Transverse colon (tissue), 4 donors: ENCODE measurements at regions of chr10 and their contacts with region 1.

Region 1: DNA sequence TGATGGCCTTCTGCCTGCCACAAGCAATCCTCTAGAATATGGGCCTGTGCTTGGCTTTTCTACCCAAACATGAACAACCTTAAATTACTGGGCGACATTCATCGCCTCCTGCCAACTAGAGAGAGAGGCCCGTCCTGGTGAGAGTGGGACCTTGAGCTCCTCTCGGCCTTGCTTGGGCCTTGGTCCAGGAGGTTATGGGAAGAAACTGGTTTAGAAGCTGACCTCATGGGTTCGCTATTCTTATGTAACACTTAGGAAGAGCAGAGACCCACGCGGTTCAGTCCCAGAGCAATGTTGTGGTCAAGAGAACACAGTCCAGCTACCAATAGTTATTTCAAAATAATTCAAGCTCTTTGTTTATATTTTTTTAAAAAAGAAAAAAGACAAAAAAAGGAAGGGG is 176.3 kb upstream of the ZNF32 start:
- DNase-seq: peak; percentile 41
- H3K4me3 ChIP-seq: no peak overlapping the region
- H3K27ac ChIP-seq: peak overlapping the region; percentile 31 to 76 (median 68)
- H3K4me1 ChIP-seq: peaks cover 0 to 10% (median 0%) of the 10 kb centered on the region in 4 donors
- H3K27me3 ChIP-seq: no peaks in the 10 kb centered on the region
- CTCF ChIP-seq: no peak
- EP300 ChIP-seq: no peak
- POLR2A ChIP-seq: no peak

Region 2: GRCh38 chr10:43801626-43802025 is 23.3 kb before region 1 on chr10:
- in situ Hi-C with region 1: no loop called
- intact Hi-C with region 1: loop called (anchors 2 kb)
- DNase-seq: no peak
- H3K4me3 ChIP-seq: no peak overlapping the region
- H3K27ac ChIP-seq: no peak overlapping the region
- H3K4me1 ChIP-seq: no peaks in the 10 kb centered on the region
- H3K27me3 ChIP-seq: no peaks in the 10 kb centered on the region
- CTCF ChIP-seq: no peak
- EP300 ChIP-seq: no peak
- POLR2A ChIP-seq: no peak

Region 3: GRCh38 chr10:43922335-43923280 is 97.7 kb after region 1 on chr10:
- in situ Hi-C with region 1: no loop called
- intact Hi-C with region 1: no loop called
- DNase-seq: no peak
- H3K4me3 ChIP-seq: no peak overlapping the region
- H3K27ac ChIP-seq: no peak overlapping the region
- H3K4me1 ChIP-seq: no peaks in the 10 kb centered on the region
- H3K27me3 ChIP-seq: no peaks in the 10 kb centered on the region
- CTCF ChIP-seq: no peak
- EP300 ChIP-seq: no peak
- POLR2A ChIP-seq: no peak